Activated CD4-positive, alpha-beta T cell treated with anti-CD3 and anti-CD28 coated beads, Interleukin-2, amount 10 ng/mL, durations not matched to agents 24 days and 14 days (primary cell): ENCODE measurements at regions of chr11 and their contacts with region 1.

Region 1: DNA sequence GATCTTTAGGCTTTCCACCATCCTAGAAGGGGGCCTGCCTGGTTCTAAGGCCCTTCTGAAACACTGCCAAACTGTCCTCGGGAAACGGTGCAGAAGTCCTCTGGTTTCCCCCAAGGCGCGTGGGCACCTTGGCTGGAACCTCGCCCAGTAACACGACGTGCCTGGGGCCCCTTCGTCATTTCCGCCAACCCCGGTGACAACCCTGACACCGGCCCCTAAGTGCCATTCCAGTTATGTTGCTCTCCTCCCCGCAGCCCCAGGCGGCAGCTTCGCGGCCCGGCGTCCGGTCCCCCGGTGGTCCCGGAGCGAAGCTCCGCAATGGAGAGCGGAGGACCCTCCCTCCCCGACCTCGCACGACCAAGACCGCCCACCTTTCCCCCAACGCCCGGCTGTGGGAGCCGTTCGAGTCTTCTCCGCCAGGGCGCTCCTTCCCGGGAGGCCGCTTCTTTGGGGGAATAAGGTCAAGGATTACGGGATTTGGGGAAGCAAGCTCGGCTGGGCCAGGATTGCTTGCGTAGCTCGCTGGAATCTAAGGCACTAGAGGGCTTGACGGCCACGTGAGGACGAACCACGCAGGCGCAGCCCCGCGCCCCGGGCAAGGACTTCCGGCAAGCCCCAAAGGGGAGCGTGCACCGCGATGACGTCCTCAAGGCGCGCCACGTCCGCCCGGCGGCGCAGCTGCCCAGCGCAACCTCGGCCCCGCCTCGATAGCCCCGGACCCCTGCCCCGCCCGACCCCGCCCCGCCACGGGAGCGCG is 626 bp downstream of the RNH1 start:
- DNase-seq: peak; percentile 99
- H3K4me3 Mint-ChIP-seq: peak overlapping the region; percentile 98
- H3K27ac Mint-ChIP-seq: peak overlapping the region; percentile 100
- H3K4me1 Mint-ChIP-seq: peaks cover 24% of the 10 kb centered on the region
- H3K27me3 Mint-ChIP-seq: no peaks in the 10 kb centered on the region

Region 2: DNA sequence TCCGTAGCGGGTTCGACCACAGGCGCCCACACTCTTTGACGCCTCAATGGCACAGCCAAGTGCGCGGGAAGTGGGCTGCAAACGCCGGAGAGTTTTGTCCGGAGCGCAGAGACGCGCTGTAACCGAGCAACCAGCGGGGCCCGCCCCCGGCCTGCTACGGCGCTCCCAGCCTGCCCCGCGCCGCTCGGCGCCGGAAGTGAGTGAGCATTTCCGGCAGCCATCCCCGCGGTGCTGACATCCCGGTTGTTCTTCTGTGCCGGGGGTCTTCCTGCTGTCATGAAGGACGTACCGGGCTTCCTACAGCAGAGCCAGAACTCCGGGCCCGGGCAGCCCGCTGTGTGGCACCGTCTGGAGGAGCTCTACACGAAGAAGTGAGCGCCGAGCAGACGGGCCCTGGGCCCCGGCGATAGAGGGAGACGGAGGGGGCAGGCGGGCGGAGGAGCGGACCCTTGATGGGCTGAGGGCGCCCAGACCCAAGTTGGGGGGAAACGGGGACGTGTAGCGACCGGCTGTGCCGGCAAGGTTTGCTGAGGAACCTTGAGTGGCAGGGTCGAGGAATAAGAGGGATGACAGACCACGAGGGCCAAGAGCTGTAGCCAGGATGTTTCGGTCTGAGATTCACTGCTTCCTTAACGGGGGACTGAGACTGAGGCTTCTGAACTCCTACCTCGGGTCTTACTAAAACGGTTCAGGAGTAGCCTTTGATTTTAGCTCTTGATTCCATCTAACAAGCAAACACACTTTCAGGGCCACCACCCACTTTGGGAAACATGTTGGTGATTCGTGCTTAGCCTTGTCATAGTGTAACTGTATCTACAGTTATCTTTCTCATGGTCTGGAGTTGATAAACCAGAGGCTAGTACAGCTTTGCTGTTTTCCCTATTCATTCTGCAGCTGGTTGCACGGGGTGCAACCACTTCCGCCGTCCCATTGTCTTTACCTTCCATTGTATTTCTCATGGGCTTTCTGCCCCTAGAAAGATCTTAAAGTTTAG is 269.3 kb before region 1 on chr11 and contains the start of gene PSMD13:
- intact Hi-C with region 1: loop called (anchors 1 kb)
- DNase-seq: peak; percentile 97
- H3K4me3 Mint-ChIP-seq: peak within 1 kb of the TSS; percentile 97
- H3K27ac Mint-ChIP-seq: peak within 1 kb of the TSS; percentile 100
- H3K4me1 Mint-ChIP-seq: peaks cover 46% of the 10 kb centered on the region
- H3K27me3 Mint-ChIP-seq: no peaks in the 10 kb centered on the region
- total RNA-seq, gene PSMD13: 272 and 275 TPM in 2 replicates

Region 3: GRCh38 chr11:406978-407739 is 99.3 kb before region 1 on chr11:
- intact Hi-C with region 1: loop called (anchors 1 kb)
- DNase-seq: peak; percentile 97
- H3K4me3 Mint-ChIP-seq: peak overlapping the region; percentile 62
- H3K27ac Mint-ChIP-seq: peak overlapping the region; percentile 60
- H3K4me1 Mint-ChIP-seq: peaks cover 2% of the 10 kb centered on the region
- H3K27me3 Mint-ChIP-seq: no peaks in the 10 kb centered on the region

Region 4: DNA sequence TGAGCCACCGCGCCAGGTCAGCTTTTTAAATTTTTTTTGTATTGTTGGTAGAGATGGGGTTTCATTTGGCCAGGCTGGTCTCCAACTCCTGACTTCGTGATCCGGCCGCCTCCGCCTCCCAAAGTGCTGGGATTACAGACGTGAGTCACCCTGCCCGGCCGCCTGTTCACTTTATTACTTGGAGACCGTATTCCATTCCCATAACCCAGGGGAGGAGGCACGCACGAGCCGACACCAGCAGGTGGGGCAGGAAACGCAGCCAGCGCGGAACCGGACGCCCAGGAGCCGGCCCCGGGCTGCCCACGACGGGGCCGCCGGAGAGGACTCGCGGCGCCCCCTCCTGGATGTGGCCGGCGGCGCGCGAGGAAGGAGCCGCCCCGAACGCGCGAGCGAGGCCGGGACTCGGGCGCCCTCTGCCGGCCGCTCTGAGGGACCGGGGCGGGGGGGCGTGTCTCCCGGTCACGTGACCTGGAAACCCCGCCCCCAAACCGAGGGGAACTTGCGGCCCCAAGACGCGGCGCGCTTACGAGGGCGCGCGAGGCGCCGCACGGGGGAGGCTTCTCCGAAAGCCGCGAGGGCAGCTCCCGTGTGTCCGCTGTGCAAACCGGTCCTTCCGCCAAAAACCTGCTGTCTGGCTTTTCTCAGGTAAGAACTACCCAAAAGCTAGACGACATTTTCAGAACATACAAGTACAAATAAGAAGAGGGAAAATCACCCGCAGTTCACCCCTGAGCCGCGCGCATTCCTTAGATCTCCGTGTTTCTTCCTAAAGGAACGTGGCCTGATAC is 12.2 kb after region 1 on chr11:
- intact Hi-C with region 1: loop called (anchors 1 kb)
- DNase-seq: peak; percentile 96
- H3K4me3 Mint-ChIP-seq: peak overlapping the region; percentile 75
- H3K27ac Mint-ChIP-seq: peak overlapping the region; percentile 69
- H3K4me1 Mint-ChIP-seq: peaks cover 4% of the 10 kb centered on the region
- H3K27me3 Mint-ChIP-seq: no peaks in the 10 kb centered on the region

Region 5: DNA sequence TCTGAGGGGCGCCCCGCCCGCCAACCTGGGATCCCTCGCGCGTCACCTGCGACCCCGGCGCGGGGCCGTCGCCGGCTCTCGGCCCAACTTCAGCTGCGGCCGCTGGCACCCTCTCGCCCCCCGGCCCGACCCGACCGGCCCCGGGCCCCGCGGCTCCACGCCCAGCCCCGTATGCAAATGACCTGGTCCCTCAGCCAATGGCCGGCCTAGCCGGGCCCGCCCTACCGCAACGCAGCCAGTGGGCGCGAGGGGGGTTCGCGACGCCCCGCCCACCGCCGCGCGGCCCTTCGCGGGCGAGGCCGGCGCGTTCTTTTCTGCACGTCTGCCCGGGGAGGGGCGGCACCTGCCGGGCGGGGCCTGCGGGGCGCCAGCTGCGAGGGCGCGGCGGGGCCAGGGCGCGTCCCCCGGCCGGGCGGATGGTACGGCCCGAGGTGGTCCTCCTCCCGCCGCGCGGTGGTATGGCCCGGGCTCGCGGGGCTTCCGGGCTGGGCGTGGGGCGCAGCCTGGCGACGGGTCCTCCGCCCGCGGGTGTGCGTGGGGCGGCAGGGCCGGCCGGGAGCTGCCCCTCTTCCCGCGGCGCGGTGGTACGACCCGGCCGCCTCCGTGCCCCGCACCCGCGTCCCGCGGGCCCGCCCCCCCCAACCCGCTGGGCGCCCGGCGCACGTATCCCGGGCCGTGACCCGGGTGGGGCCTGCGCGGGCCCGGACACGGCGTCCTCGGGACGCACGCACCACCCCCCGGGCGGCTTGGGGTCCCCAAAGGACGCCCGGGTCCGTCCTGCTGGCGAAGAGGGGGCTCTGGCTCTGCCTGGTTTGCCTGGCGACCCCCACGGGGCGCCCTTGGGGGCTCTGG is 62.1 kb after region 1 on chr11:
- intact Hi-C with region 1: loop called (anchors 2 kb)
- DNase-seq: peak; percentile 99
- H3K4me3 Mint-ChIP-seq: peak overlapping the region; percentile 85
- H3K27ac Mint-ChIP-seq: peak overlapping the region; percentile 81
- H3K4me1 Mint-ChIP-seq: peaks cover 15% of the 10 kb centered on the region
- H3K27me3 Mint-ChIP-seq: no peaks in the 10 kb centered on the region

Region 6: DNA sequence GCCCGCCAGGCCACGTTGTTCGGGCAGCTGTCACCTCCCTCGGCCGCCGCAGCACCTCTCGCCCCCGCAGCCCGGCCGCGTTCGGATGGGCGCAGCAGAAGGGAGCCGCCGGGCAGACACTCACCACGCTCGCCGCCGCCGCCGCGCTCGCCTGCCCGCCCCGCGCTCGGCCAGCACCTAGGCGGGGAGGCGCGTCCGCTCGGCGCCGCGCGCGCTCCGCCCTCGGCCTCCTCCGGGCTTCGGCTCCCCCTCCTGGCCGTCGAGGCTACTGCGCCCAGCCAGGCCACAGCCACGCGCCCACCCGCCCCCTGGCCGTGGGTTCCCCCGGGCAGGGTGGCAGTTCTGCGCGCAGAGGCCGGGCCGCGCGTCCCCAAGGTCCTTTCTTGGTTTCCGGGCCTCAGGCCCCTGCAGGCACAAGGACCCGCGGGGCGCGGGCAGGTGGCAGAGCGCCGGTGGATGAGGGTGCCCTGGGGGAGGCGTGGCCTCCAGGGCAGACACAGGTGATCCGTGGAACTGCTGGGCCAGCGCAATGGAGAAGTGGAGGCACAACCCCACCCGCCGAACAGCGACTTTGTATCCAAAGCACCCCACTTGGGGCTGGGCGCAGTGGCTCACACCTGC is 291.8 kb after region 1 on chr11 and contains the start of gene SLC25A22:
- intact Hi-C with region 1: loop called (anchors 5 kb)
- DNase-seq: peak; percentile 97
- H3K4me3 Mint-ChIP-seq: peak within 1 kb of the TSS; percentile 91
- H3K27ac Mint-ChIP-seq: peak within 1 kb of the TSS; percentile 87
- H3K4me1 Mint-ChIP-seq: peaks cover 7% of the 10 kb centered on the region
- H3K27me3 Mint-ChIP-seq: no peaks in the 10 kb centered on the region
- total RNA-seq, gene SLC25A22: 84.9 and 90.3 TPM in 2 replicates